GM12878 (cell line): ENCODE measurements at regions of chr2 and their contacts with region 1.

Region 1: GRCh38 chr2:182240862-182241371 is 185.9 kb downstream of the PDE1A start:
- DNase-seq: peak; percentile 62
- ATAC-seq: peak; percentile 100
- H3K4me3 ChIP-seq: no peak overlapping the region
- H3K27ac ChIP-seq: no peak overlapping the region
- H3K4me1 ChIP-seq: peaks cover 5% of the 10 kb centered on the region; the same call in 1 of the 2 replicates
- H3K27me3 ChIP-seq: no peaks in the 10 kb centered on the region
- CTCF ChIP-seq: peak; percentile 57 to 70 (median 60)
- EP300 ChIP-seq: peak in 1 of 2 experiments; percentile 36; a peak in 1 of 4 replicates
- POLR2A ChIP-seq: no peak
- RAD21 ChIP-seq: peak; percentile 64

Region 2: DNA sequence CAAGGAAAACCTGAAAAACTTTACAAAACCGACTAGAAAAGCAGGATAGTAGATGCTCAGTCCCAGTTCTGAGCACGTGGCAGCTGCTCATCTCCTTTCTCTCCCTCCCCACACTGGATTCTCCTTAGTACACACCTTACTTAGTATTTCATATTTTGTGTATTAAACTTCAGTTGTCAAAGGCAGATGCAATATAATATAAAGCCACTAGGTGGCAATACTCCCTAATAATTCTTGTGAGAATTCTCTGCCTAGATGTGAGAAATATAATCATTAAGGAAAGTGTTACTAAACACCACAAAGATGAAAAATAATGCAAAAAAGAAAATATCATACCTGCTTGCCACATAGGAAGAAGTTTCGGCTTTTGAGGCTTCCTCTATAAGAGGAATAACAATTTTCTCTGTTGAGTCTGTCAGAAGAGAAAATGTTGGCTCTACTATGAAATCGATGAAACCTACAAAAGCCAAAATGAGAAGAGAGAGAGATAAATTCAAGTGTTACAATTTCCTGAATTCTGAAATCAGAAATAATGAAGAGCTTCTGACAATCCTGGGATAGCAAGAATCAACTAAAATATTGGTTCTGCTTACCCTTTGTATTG is 54.7 kb before region 1 on chr2:
- CTCF ChIA-PET with region 1: interaction called, 14 read pairs
- POLR2A ChIA-PET with region 1: no interaction called
- RAD21 ChIA-PET with region 1: interaction called, 13 read pairs
- SMC1A ChIA-PET with region 1: interaction called, 8 read pairs
- in situ Hi-C with region 1: no loop called
- intact Hi-C with region 1: loop called (anchors 5 kb)
- DNase-seq: no peak
- ATAC-seq: peak; percentile 75
- H3K4me3 ChIP-seq: no peak overlapping the region
- H3K27ac ChIP-seq: no peak overlapping the region
- H3K4me1 ChIP-seq: no peaks in the 10 kb centered on the region
- H3K27me3 ChIP-seq: no peaks in the 10 kb centered on the region
- CTCF ChIP-seq: peak; percentile 19 to 70 (median 51); a peak in 5 of 6 replicates
- EP300 ChIP-seq: no peak
- POLR2A ChIP-seq: no peak
- RAD21 ChIP-seq: peak; percentile 79

Region 3: DNA sequence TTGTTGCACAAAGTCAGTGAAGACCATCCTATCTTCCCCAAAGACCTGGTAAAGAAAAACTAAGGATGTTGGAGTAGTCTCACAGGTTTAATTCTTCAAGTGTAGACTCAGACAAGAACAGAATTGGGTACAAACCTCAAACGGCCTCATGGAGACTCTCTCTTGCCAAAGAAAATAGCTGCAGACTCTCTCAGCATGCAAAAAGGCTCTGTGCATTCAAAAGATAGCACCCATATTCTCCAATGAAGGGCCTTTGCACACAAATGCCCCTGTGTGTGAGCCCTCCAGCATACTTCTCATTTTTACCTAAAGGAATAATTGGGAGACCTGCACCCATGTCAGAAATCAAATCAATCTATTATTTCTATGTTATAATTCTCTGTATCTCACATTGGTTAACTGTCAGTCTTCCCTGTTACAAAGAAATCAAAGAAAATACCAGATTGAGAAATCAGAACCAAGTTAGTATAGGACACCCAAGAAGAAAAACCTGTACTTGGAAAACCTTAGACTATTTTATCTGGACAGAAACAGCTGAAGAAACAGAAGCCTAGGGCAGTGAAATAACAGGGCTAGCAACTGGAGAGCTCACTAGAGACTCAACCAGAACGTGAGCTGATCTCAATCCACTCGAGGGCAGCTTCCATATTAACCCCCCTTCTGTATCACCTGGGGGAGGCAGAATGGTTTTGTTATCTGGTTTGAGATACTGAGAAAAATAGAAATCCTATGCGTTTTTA is 340.4 kb after region 1 on chr2:
- CTCF ChIA-PET with region 1: interaction called, 25 read pairs
- POLR2A ChIA-PET with region 1: no interaction called
- RAD21 ChIA-PET with region 1: interaction called, 13 read pairs
- SMC1A ChIA-PET with region 1: interaction called, 8 read pairs
- in situ Hi-C with region 1: no loop called
- intact Hi-C with region 1: loop called (anchors 5 kb)
- DNase-seq: no peak
- ATAC-seq: no peak
- H3K4me3 ChIP-seq: no peak overlapping the region
- H3K27ac ChIP-seq: no peak overlapping the region
- H3K4me1 ChIP-seq: no peaks in the 10 kb centered on the region
- H3K27me3 ChIP-seq: peaks cover 0 to 2% of the 10 kb centered on the region in 2 experiments; a peak in 1 of 4 replicates
- CTCF ChIP-seq: no peak
- EP300 ChIP-seq: no peak
- POLR2A ChIP-seq: no peak
- RAD21 ChIP-seq: no peak

Region 4: DNA sequence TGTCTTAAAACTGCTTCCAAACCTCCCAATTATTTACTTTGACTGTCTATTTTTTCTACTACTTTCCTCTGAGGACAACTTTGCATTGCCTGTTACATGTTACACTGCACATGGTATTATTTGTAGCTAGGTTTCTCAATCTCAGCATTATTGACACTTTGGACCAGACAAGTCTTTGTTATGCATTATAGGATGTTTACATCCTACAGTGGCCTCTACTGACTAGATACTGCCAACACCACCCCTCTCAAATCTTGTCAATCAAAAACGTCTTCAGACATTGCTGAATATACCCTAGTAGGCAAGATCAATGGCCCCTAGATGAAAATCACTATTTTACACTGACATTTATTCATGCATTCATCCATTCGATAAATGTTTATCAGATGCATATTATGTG is 345.5 kb after region 1 on chr2:
- CTCF ChIA-PET with region 1: interaction called, 25 read pairs
- POLR2A ChIA-PET with region 1: no interaction called
- RAD21 ChIA-PET with region 1: interaction called, 13 read pairs
- SMC1A ChIA-PET with region 1: interaction called, 8 read pairs
- in situ Hi-C with region 1: no loop called
- intact Hi-C with region 1: loop called (anchors 5 kb)
- DNase-seq: no peak
- ATAC-seq: peak; percentile 86
- H3K4me3 ChIP-seq: no peak overlapping the region
- H3K27ac ChIP-seq: no peak overlapping the region
- H3K4me1 ChIP-seq: no peaks in the 10 kb centered on the region
- H3K27me3 ChIP-seq: no peaks in the 10 kb centered on the region
- CTCF ChIP-seq: peak; percentile 18 to 40 (median 30); a peak in 3 of 6 replicates
- EP300 ChIP-seq: no peak
- POLR2A ChIP-seq: no peak
- RAD21 ChIP-seq: peak; percentile 30; the same call in 1 of the 2 replicates